Activated naive CD4-positive, alpha-beta T cell treated with anti-CD3 and anti-CD28 coated beads for 36 hours (primary cell): ENCODE measurements at regions of chr12 and their contacts with region 1.

Region 1: GRCh38 chr12:27523642-27524493 is at the start of gene PPFIBP1:
- DNase-seq: peak; percentile 99
- H3K4me3 Mint-ChIP-seq: peak within 1 kb of the TSS; percentile 94
- H3K27ac Mint-ChIP-seq: peak within 1 kb of the TSS; percentile 85
- H3K4me1 Mint-ChIP-seq: peaks cover 24% of the 10 kb centered on the region
- H3K27me3 Mint-ChIP-seq: peaks cover 1% of the 10 kb centered on the region
- total RNA-seq, gene PPFIBP1: 43.4 to 43.6 TPM

Region 2: GRCh38 chr12:27332407-27333301 is 191.2 kb before region 1 on chr12 and contains the start of gene BMAL2:
- CTCF ChIA-PET with region 1: no interaction called
- intact Hi-C with region 1: loop called (anchors 1 kb)
- DNase-seq: peak; percentile 44
- H3K4me3 Mint-ChIP-seq: peak within 1 kb of the TSS; percentile 90
- H3K27ac Mint-ChIP-seq: peak within 1 kb of the TSS; percentile 74
- H3K4me1 Mint-ChIP-seq: peaks cover 34% of the 10 kb centered on the region
- H3K27me3 Mint-ChIP-seq: peaks cover 30% of the 10 kb centered on the region
- total RNA-seq, gene BMAL2: 7.9 to 9.2 TPM

Region 3: GRCh38 chr12:27498149-27498548 is 25.7 kb before region 1 on chr12:
- CTCF ChIA-PET with region 1: interaction called, 3 read pairs
- intact Hi-C with region 1: loop called (anchors 1 kb)
- DNase-seq: no peak
- H3K4me3 Mint-ChIP-seq: no peak overlapping the region
- H3K27ac Mint-ChIP-seq: peak overlapping the region; percentile 11
- H3K4me1 Mint-ChIP-seq: peaks cover 27% of the 10 kb centered on the region
- H3K27me3 Mint-ChIP-seq: peaks cover 18% of the 10 kb centered on the region

Region 4: GRCh38 chr12:27554421-27555186 is 30.7 kb after region 1 on chr12:
- CTCF ChIA-PET with region 1: no interaction called
- intact Hi-C with region 1: no loop called
- DNase-seq: no peak
- H3K4me3 Mint-ChIP-seq: no peak overlapping the region
- H3K27ac Mint-ChIP-seq: no peak overlapping the region
- H3K4me1 Mint-ChIP-seq: peaks cover 25% of the 10 kb centered on the region
- H3K27me3 Mint-ChIP-seq: peaks cover 5% of the 10 kb centered on the region

Region 5: GRCh38 chr12:27635349-27635972 is 111.6 kb after region 1 on chr12:
- CTCF ChIA-PET with region 1: interaction called, 3 read pairs
- intact Hi-C with region 1: loop called (anchors 1 kb)
- DNase-seq: peak; percentile 14
- H3K4me3 Mint-ChIP-seq: no peak overlapping the region
- H3K27ac Mint-ChIP-seq: no peak overlapping the region
- H3K4me1 Mint-ChIP-seq: no peaks in the 10 kb centered on the region
- H3K27me3 Mint-ChIP-seq: no peaks in the 10 kb centered on the region

Region 6: DNA sequence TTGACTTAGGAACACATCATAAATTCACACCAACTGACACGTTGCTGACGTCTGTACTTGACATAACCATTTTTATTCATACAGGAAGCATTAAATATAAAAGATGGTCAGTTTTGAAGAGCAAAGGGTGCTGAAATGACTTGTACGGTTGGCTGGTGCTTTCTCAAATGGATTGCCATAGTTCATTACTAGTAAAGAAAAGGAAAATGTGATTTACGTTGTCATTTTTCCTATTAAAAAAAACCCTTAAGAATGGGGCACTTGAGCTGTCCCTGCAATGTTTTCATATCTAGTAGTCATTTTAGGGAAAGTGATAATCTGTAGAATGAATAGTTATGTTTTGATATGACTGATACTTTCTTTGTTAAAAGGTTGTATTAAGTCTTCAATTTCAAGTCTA is 278.6 kb after region 1 on chr12:
- CTCF ChIA-PET with region 1: no interaction called
- intact Hi-C with region 1: loop called (anchors 5 kb)
- DNase-seq: peak; percentile 49
- H3K4me3 Mint-ChIP-seq: no peak overlapping the region
- H3K27ac Mint-ChIP-seq: peak overlapping the region; percentile 85
- H3K4me1 Mint-ChIP-seq: peaks cover 59% of the 10 kb centered on the region
- H3K27me3 Mint-ChIP-seq: peaks cover 4% of the 10 kb centered on the region